Activated CD4-positive, alpha-beta memory T cell treated with anti-CD3 and anti-CD28 coated beads, Interleukin-2, amount 10 ng/mL, durations not matched to agents 7 days and 5 days (primary cell): ENCODE measurements at regions of chr19 and their contacts with region 1.

Region 1: DNA sequence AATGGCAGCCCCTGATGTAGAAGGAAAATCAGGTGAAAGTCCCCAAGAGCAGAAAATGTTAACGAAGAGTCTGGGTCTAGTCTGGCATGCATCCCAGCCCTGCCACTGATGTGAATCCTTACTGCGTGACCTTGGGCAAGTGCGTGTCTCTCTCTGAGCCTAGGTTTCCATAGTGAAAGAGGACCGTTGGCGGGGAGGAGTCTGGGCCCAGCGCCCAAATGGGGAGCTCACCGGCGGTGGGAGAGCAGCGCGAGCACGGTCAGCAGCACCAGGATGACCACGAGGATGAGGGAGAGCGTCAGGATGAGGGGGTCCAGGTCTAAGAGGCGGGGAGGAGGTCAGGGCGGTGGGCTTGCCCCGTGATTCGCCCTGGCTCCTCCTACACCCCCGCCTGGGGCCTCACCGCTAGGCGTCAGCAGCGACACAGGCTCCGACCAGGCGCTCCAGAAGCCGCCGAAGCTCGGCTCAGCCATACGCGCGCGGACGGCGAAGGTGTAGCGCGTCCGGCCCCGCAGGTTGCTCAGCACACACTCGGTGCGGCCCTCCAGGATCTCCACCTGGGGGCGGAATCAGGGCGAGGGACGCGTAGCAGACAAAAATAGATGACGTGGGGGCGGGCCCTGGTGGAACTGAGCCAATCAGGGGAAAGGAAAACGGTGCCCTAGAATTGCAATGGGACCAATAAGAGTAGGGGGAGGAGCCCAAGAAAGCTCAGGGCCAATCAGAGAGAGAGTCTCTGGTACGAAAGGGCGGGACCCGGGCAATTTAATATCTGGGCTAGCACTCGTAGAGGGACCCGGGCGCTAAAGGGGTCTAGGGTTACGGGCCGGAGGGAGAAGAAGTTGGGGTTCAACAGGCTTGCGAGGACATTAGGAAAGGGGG is 3.2 kb downstream of the EPOR start:
- DNase-seq: peak; percentile 98
- H3K4me3 Mint-ChIP-seq: peak overlapping the region; percentile 84
- H3K27ac Mint-ChIP-seq: peak overlapping the region; percentile 99
- H3K4me1 Mint-ChIP-seq: peaks cover 48% of the 10 kb centered on the region
- H3K27me3 Mint-ChIP-seq: peaks cover 16% of the 10 kb centered on the region

Region 2: GRCh38 chr19:11197264-11198174 is 183.4 kb before region 1 on chr19 and contains the start of gene KANK2:
- CTCF ChIA-PET with region 1: no interaction called
- POLR2A ChIA-PET with region 1: no interaction called
- DNase-seq: peak; percentile 78
- H3K4me3 Mint-ChIP-seq: peak within 1 kb of the TSS; percentile 65
- H3K27ac Mint-ChIP-seq: no peak within 1 kb of the TSS
- H3K4me1 Mint-ChIP-seq: peaks cover 17% of the 10 kb centered on the region
- H3K27me3 Mint-ChIP-seq: peaks cover 16% of the 10 kb centered on the region
- total RNA-seq, gene KANK2: 2.3 to 2.8 TPM

Region 3: DNA sequence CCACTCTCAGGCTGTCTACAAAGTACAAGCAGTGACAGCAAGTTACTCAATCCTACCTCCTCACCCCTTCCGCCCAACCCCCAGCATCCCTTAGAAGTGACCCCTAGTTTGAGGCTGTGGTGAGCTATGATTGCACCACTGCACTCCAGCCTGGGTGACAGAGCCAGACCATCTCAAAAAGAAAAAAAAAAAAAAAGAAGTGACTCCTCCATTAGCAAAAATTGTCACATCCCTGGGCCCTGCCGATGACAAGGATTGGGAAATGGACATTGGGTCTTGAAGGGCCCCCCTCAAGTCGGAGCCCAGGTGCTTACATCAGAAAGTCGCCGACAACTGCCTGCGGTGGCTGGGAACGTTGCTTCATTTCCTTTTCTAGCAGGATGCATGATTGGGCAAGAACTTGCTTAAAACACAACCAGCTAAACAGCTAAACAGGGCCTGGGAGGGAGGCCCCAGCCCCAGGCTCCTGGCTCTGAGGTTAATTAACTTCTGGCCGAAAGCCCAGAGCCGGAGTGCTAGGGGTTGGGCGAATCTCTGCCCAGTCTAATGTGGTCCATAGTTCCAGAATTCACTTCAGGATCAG is 56.7 kb before region 1 on chr19:
- CTCF ChIA-PET with region 1: interaction called, 10 read pairs
- POLR2A ChIA-PET with region 1: interaction called, 9 read pairs
- DNase-seq: peak; percentile 75
- H3K4me3 Mint-ChIP-seq: peak overlapping the region; percentile 55
- H3K27ac Mint-ChIP-seq: peak overlapping the region; percentile 92
- H3K4me1 Mint-ChIP-seq: peaks cover 23% of the 10 kb centered on the region
- H3K27me3 Mint-ChIP-seq: peaks cover 5% of the 10 kb centered on the region

Region 4: GRCh38 chr19:11367528-11367927 is 13.4 kb before region 1 on chr19:
- CTCF ChIA-PET with region 1: interaction called, 30 read pairs
- POLR2A ChIA-PET with region 1: interaction called, 16 read pairs
- DNase-seq: no peak
- H3K4me3 Mint-ChIP-seq: no peak overlapping the region
- H3K27ac Mint-ChIP-seq: no peak overlapping the region
- H3K4me1 Mint-ChIP-seq: no peaks in the 10 kb centered on the region
- H3K27me3 Mint-ChIP-seq: no peaks in the 10 kb centered on the region

Region 5: DNA sequence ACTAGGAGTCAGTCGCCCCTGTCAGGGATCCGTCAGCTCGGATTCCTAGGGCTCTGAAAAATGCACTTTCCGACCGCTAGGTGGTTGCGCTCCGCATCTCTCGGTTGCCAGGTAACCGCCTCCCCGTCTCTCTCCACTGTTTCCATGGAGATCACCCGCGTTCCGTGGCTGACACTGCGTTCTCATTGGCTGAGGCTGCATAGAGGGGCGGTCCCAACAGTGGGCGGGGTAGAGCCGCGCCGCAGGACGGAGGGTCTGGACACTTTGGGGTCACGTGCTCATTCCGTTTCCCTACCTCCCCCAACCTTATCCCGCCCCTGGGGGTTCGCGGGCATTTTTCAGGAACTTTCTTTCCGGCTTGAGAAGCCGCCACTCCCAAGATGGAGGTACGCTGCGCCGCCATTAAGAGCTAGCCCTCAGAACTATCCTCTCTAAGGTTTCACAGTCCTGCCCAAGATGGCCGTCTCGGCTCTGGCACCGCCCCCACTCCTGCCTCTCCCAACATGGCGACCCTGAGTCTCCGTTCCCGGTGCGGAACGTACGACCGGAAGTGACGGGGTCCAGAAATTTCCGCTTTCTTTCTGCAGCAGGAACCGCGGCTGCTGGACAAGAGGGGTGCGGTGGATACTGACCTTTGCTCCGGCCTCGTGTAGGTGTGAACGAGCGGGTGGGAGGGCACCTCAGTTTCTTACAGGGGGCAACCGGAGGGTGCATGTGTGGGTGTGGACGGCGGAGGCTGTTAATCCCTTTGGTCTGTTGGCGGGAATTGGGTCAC is 54.4 kb after region 1 on chr19 and contains the starts of genes ODAD3 and PRKCSH:
- CTCF ChIA-PET with region 1: interaction called, 18 read pairs
- POLR2A ChIA-PET with region 1: interaction called, 7 read pairs
- DNase-seq: peak; percentile 99
- H3K4me3 Mint-ChIP-seq: peak within 1 kb of the TSS; percentile 99
- H3K27ac Mint-ChIP-seq: peak within 1 kb of the TSS; percentile 93
- H3K4me1 Mint-ChIP-seq: peaks cover 24% of the 10 kb centered on the region
- H3K27me3 Mint-ChIP-seq: peaks cover 1% of the 10 kb centered on the region
- total RNA-seq, gene ODAD3: not detected
- total RNA-seq, gene PRKCSH: 315 to 318 TPM

Region 6: DNA sequence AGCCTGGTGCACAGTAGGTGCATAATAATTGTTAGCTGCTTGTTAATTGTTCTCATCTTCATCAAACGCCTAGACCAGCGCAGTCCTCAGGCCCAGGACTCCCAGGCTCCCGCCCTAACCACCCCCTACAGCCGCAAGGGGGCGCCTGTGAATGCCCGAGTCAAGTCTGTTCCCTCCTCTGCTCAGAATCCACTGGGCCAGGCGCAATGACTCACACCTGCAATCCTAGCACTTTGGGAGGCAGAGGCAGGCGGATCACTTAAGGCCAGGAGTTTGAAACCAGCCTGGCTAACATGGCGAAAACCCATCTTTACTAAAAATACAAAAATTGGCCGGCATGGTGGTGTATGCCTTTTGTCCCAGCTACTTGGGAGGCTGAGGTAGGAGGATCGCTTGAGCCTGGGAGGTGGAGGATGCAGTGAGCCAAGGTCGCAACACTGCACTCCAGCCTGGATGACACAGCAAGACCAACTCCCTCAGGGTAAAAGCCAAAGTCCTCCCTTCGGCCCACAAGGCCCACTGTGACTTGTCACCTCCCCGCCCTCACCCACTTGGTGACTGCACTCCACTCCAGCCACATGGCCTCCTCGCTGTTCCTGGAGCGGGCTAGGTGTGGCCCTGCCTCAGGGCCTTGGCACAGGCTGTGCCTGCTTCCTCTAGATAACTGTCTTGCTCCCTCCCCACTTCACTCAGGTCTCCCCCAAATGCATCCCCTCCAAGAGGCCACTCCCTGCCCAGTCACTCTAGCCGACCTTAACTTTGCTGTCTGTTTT is 115.7 kb after region 1 on chr19:
- CTCF ChIA-PET with region 1: no interaction called
- POLR2A ChIA-PET with region 1: no interaction called
- DNase-seq: peak; percentile 63
- H3K4me3 Mint-ChIP-seq: no peak overlapping the region
- H3K27ac Mint-ChIP-seq: no peak overlapping the region
- H3K4me1 Mint-ChIP-seq: peaks cover 2% of the 10 kb centered on the region
- H3K27me3 Mint-ChIP-seq: no peaks in the 10 kb centered on the region

Region 7: DNA sequence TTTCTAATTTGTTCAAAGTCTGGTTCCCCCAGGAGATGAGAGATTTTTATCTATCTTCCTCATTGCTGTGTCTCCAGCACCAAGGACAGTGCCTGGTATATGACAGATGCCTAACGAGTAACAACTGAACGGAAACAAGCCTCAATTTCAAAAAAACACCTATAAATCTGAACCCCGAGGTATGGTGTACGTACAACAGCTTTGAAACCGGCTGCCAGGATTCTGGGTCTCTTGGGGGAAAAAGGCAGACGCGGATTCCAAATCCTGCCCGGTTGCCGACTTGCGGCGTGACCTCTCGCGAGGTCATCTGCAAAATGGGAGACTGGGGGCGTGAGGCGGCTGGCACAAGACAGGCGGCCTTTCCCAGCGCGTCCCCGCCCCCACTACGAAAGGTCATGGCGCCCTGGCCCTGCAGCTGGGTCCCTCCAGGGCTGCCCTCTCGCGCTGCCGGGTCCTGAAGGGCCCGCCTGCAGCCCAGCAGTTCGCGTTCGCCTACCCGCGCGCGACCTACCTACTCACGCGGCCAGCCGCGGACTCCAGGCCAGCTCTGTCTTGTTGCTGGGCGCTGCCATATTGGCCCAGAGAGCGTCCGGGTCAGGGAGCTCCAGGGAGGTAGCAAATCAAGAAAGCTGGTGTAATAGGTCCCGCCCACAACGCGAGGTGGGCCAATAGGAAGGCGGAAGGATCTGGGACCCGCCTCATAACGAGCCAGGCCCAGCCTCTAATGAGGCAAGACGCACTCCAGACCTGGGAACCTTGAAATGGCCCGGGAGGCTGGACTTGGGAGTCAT is 147.9 kb after region 1 on chr19 and contains the start of gene ECSIT:
- CTCF ChIA-PET with region 1: interaction called, 11 read pairs
- POLR2A ChIA-PET with region 1: interaction called, 6 read pairs
- DNase-seq: peak; percentile 94
- H3K4me3 Mint-ChIP-seq: peak within 1 kb of the TSS; percentile 98
- H3K27ac Mint-ChIP-seq: peak within 1 kb of the TSS; percentile 89
- H3K4me1 Mint-ChIP-seq: peaks cover 23% of the 10 kb centered on the region
- H3K27me3 Mint-ChIP-seq: no peaks in the 10 kb centered on the region
- total RNA-seq, gene ECSIT: 24.8 to 26.8 TPM